Motor neuron (in vitro differentiated cells): ENCODE measurements at regions of chr14 and their contacts with region 1.

Region 1: GRCh38 chr14:60734465-60735242 is at the start of gene MNAT1:
- ATAC-seq: peak; percentile 94 to 99 (median 98)
- H3K4me3 ChIP-seq: peak within 1 kb of the TSS; percentile 66 to 92 (median 80)
- H3K27ac ChIP-seq: peak within 1 kb of the TSS; percentile 62 to 74
- H3K4me1 ChIP-seq: peaks cover 0 to 5% of the 10 kb centered on the region in 2 donors
- total RNA-seq, gene MNAT1: 37.0 to 69.2 (median 47.1) TPM

Region 2: GRCh38 chr14:60980811-60981632 is 246.4 kb after region 1 on chr14 and contains the starts of genes SLC38A6 and TRMT5:
- in situ Hi-C with region 1: loop called in 1 of 9 experiments (anchors 25 kb)
- ATAC-seq: peak; percentile 91 to 96 (median 94)
- H3K4me3 ChIP-seq: peak within 1 kb of the TSS; percentile 80 to 95 (median 84)
- H3K27ac ChIP-seq: peak within 1 kb of the TSS; percentile 70 to 77
- H3K4me1 ChIP-seq: peaks cover 0 to 24% of the 10 kb centered on the region in 2 donors
- total RNA-seq, gene SLC38A6: 6.6 to 52.5 (median 23.1) TPM
- total RNA-seq, gene TRMT5: 7.9 to 21.2 (median 12.3) TPM